Gastrocnemius medialis (tissue), 4 donors: ENCODE measurements at regions of chr3 and their contacts with region 1.

Region 1: DNA sequence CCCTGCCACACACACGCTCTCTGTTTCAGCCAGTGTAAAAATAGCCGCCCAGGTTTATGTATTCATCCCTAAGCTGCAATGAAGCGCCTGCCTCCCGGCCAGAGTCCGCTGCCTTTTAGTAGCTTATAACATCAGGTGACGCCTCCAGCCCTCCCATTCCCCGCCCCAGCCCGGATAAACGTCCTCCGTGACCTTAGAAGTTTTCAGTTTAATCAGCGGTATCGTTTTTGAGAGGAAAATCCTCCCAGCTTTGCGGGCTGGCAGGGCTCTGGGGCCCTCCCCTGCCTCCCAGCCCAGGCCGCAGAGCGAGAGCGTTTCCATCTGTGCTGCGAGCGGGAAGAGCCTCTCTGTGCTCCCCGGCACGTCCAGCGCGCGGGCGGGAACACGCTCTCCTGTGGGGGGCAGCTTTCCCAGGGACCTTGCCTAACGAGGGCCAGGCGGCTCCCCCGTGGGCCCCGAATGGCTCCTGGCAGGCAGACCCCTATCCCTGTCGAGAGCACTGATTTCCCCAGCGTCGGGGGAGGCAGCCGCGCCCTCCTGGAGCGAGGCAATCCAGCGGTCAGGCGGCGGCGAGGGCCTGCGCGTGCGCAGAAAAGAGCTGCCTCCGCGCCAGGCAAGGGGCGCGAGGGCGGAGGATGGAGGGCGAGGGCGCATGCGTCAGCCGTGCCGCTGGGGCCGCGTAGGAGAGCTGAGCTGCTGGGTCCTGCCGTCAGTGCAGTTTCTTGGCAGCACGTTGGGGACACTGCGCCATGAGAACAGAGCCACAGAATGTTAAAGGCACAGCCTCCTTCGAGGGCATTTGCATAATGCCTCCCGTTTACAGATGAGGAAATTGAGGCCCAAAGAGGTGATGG is 71.1 kb downstream of the CCNL1 start:
- DNase-seq: peak; percentile 94 to 96
- ATAC-seq: peak; percentile 79 to 80
- H3K4me3 ChIP-seq: peak overlapping the region; percentile 77 to 87 (median 82)
- H3K27ac ChIP-seq: peak overlapping the region; percentile 99 to 100 (median 100)
- H3K4me1 ChIP-seq: peaks cover 38 to 44% of the 10 kb centered on the region in 2 donors
- H3K27me3 ChIP-seq: no peaks in the 10 kb centered on the region
- CTCF ChIP-seq: peak in 2 of 5 experiments; percentile 23 to 29
- POLR2A ChIP-seq: peak; percentile 94 to 95

Region 2: GRCh38 chr3:156547637-156548036 is 541.2 kb before region 1 on chr3:
- in situ Hi-C with region 1: loop called in 3 of 4 experiments (anchors 10 kb)
- intact Hi-C with region 1: loop called (anchors 5 kb)
- DNase-seq: no peak
- ATAC-seq: no peak
- H3K4me3 ChIP-seq: no peak overlapping the region
- H3K27ac ChIP-seq: peak overlapping the region in 2 of 4 donors; percentile 6 to 22
- H3K4me1 ChIP-seq: peaks cover 26 to 52% of the 10 kb centered on the region in 2 donors
- H3K27me3 ChIP-seq: no peaks in the 10 kb centered on the region
- CTCF ChIP-seq: no peak
- POLR2A ChIP-seq: no peak

Region 3: DNA sequence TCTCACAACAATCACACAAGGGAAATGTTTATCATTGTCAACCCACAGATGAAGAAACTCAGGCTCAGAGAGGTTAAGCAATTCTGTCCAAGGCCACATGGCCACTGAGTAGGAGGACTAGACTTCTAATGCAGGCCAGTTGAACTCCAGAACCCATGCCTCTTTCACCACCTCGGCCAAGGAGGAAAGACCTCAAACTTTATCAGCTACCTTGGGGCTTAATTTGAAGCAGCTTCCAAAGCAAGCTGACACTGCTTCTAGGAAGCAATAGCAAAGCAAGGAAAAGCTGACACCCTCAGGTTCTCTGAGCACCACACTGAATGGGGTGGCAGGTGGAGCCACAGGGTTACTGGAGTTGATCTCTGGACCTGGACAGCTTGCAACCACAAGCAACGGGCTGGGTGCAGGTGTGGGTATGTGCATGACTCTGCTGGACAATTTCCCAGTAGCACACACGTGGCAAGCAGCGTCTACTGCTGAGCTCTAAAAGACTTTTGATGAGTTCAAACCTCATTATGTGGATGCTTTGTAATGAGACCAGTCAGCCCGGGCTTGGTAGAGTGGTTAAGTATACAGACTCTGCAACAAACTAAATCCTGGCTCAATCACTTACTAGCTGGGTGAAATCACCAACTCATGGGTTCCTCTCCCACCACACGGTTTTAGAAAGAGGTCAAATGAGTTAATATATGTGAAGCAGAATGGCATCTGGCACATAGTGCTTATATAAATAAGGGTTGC is 48.0 kb after region 1 on chr3:
- in situ Hi-C with region 1: loop called in 3 of 4 experiments (anchors 5 to 10 kb)
- intact Hi-C with region 1: loop called (anchors 1 kb)
- DNase-seq: peak; percentile 57 to 72
- ATAC-seq: peak; percentile 49 to 50
- H3K4me3 ChIP-seq: no peak overlapping the region
- H3K27ac ChIP-seq: peak overlapping the region; percentile 76 to 86 (median 82)
- H3K4me1 ChIP-seq: peaks cover 58 to 59% of the 10 kb centered on the region in 2 donors
- H3K27me3 ChIP-seq: no peaks in the 10 kb centered on the region
- CTCF ChIP-seq: no peak
- POLR2A ChIP-seq: no peak